Activated CD4-positive, alpha-beta T cell treated with anti-CD3 and anti-CD28 coated beads for 36 hours (primary cell): ENCODE measurements at regions of chr4 and their contacts with region 1.

Region 1: GRCh38 chr4:137794764-137795254 is 262.5 kb upstream of the PCDH18 start:
- DNase-seq: no peak
- ATAC-seq: no peak
- H3K4me3 Mint-ChIP-seq: no peak overlapping the region
- H3K27ac Mint-ChIP-seq: no peak overlapping the region
- H3K4me1 Mint-ChIP-seq: no peaks in the 10 kb centered on the region
- H3K27me3 Mint-ChIP-seq: no peaks in the 10 kb centered on the region

Region 2: GRCh38 chr4:138003248-138003647 is 208.4 kb after region 1 on chr4:
- CTCF ChIA-PET with region 1: no interaction called
- POLR2A ChIA-PET with region 1: interaction called, 11 read pairs
- intact Hi-C with region 1: no loop called
- DNase-seq: no peak
- ATAC-seq: no peak
- H3K4me3 Mint-ChIP-seq: no peak overlapping the region
- H3K27ac Mint-ChIP-seq: no peak overlapping the region
- H3K4me1 Mint-ChIP-seq: no peaks in the 10 kb centered on the region
- H3K27me3 Mint-ChIP-seq: no peaks in the 10 kb centered on the region

Region 3: GRCh38 chr4:138174981-138175794 is 380.4 kb after region 1 on chr4:
- CTCF ChIA-PET with region 1: no interaction called
- POLR2A ChIA-PET with region 1: no interaction called
- intact Hi-C with region 1: no loop called
- DNase-seq: no peak
- ATAC-seq: no peak
- H3K4me3 Mint-ChIP-seq: no peak overlapping the region
- H3K27ac Mint-ChIP-seq: no peak overlapping the region
- H3K4me1 Mint-ChIP-seq: no peaks in the 10 kb centered on the region
- H3K27me3 Mint-ChIP-seq: no peaks in the 10 kb centered on the region